ENCODE measurements at regions of chr19 and their contacts with region 1.

Region 1: GRCh38 chr19:41457241-41457640 is 14.3 kb downstream of the ERICH4 start:
- DNase-seq: no peak
- ATAC-seq: peak in 2 of 4 donors; percentile 33 to 40
- H3K4me3 ChIP-seq: no peak overlapping the region
- H3K27ac ChIP-seq: peak overlapping the region in 7 of 12 donors; percentile 34 to 73 (median 62)
- H3K4me1 ChIP-seq: peaks cover 0 to 28% (median 21%) of the 10 kb centered on the region in 12 donors
- H3K27me3 ChIP-seq: peaks cover 0 to 20% (median 0%) of the 10 kb centered on the region in 9 donors
- CTCF ChIP-seq: no peak
- POLR2A ChIP-seq: no peak

Region 2: GRCh38 chr19:41409288-41409687 is 48.0 kb before region 1 on chr19:
- intact Hi-C with region 1: no loop called
- DNase-seq: peak in 4 of 5 donors; percentile 56 to 66 (median 58)
- ATAC-seq: peak; percentile 69 to 75 (median 73)
- H3K4me3 ChIP-seq: no peak overlapping the region
- H3K27ac ChIP-seq: peak overlapping the region; percentile 55 to 88 (median 78)
- H3K4me1 ChIP-seq: peaks cover 0 to 82% (median 68%) of the 10 kb centered on the region in 12 donors
- H3K27me3 ChIP-seq: no peaks in the 10 kb centered on the region
- CTCF ChIP-seq: no peak
- POLR2A ChIP-seq: no peak

Region 3: GRCh38 chr19:41479757-41480191 is 22.5 kb after region 1 on chr19:
- intact Hi-C with region 1: loop called in 1 of 10 experiments (anchors 2 kb)
- DNase-seq: peak in 4 of 5 donors; percentile 60 to 80 (median 62)
- ATAC-seq: peak; percentile 83 to 88 (median 86)
- H3K4me3 ChIP-seq: peak overlapping the region in 8 of 12 donors; percentile 17 to 55 (median 32)
- H3K27ac ChIP-seq: peak overlapping the region in 11 of 12 donors; percentile 56 to 89 (median 80)
- H3K4me1 ChIP-seq: peaks cover 0 to 33% (median 11%) of the 10 kb centered on the region in 12 donors
- H3K27me3 ChIP-seq: peaks cover 0 to 22% (median 4%) of the 10 kb centered on the region in 9 donors
- CTCF ChIP-seq: no peak
- POLR2A ChIP-seq: no peak

Region 4: GRCh38 chr19:41531438-41532311 is 74.4 kb after region 1 on chr19:
- intact Hi-C with region 1: loop called in 3 of 10 experiments (anchors 2 to 5 kb)
- DNase-seq: peak; percentile 83 to 88 (median 87)
- ATAC-seq: peak; percentile 95 to 97 (median 96)
- H3K4me3 ChIP-seq: peak overlapping the region in 10 of 12 donors; percentile 3 to 48 (median 30)
- H3K27ac ChIP-seq: peak overlapping the region; percentile 63 to 97 (median 80)
- H3K4me1 ChIP-seq: peaks cover 0 to 73% (median 11%) of the 10 kb centered on the region in 12 donors
- H3K27me3 ChIP-seq: peaks cover 0 to 1% (median 0%) of the 10 kb centered on the region in 9 donors
- CTCF ChIP-seq: no peak
- POLR2A ChIP-seq: peak in 1 of 2 donors; percentile 93